ENCODE measurements at regions of chr7 and their contacts with region 1.

Region 1: DNA sequence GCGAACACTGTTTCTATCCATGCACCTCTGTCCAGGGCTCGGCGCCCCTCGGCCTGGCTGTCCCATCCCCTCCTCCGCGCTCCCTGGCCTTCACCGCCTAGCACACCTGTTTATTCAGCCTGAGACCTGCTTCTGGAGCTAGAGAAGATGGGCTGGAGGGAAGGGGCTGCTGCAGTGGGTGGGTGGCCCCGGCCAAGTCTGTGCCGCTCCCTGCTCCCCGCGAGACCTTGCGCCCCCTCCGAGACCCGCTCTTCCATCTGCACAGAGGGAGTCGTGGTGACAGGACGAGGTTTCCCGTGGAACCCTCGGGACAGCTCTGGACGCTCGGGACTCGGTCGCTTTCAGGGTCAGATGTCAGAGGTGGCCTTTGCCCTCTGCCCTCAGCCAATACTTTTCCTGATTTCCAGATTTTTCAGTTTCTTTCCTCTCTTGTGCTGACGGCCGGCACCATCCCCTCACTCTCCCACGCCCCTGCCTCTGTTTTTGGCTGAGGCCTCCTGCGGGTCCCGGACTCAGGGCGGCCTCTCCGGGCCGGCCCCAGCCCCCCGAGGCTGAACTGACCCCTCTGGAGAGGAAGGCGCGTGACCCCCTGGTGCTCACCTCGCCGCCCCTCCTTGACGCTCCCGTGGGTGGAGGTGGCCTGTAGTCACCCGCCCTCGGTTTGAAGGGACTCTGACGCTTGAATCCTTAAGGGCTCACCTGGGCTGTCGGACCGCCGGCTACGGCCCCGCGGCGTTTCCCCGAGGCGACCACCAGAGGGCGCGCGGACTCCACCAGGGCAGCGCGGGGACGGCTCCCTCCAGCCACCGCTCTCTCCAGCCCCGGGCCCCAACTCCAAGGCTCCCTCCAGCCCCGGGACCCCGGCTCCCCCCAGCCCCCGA is 15.6 kb downstream of the SHH start:
- DNase-seq: no peak
- ATAC-seq: peak; percentile 96
- H3K4me3 ChIP-seq: no peak overlapping the region
- H3K27ac ChIP-seq: no peak overlapping the region
- H3K4me1 ChIP-seq: peaks cover 2% of the 10 kb centered on the region; the same call in 1 of the 2 replicates
- H3K27me3 ChIP-seq: peaks cover 36% of the 10 kb centered on the region
- CTCF ChIP-seq: peak; percentile 85
- POLR2A ChIP-seq: no peak
- RAD21 ChIP-seq: peak; percentile 89

Region 2: GRCh38 chr7:156650042-156650441 is 853.4 kb after region 1 on chr7:
- CTCF ChIA-PET with region 1: no interaction called
- POLR2A ChIA-PET with region 1: no interaction called
- dilution Hi-C with region 1: no loop called
- in situ Hi-C with region 1: loop called (anchors 25 kb)
- intact Hi-C with region 1: loop called (anchors 5 kb)
- DNase-seq: no peak
- ATAC-seq: peak; percentile 42; the same call in 1 of the 2 replicates
- H3K4me3 ChIP-seq: no peak overlapping the region
- H3K27ac ChIP-seq: no peak overlapping the region
- H3K4me1 ChIP-seq: no peaks in the 10 kb centered on the region; the same call in 1 of the 2 replicates
- H3K27me3 ChIP-seq: no peaks in the 10 kb centered on the region
- CTCF ChIP-seq: peak; percentile 41
- POLR2A ChIP-seq: no peak
- RAD21 ChIP-seq: peak; percentile 41

Region 3: DNA sequence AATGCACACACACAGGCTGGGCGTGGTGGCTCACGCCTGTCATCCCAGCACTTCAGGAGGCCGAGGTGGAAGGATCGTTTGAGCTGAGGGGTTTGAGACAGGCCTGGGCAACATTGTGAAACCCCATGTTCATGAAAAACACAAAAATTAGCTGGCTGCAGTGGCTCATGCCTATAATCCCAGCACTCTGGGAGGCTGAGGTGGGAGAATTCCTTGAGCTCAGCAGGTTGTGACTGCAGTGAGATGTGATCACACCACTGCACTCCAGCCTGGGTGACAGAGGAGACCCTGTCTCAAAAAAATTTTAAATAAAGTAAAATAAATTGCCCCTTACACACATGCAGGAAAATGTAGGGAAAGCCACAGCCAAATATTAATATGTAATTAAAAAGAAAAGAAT is 888.0 kb after region 1 on chr7:
- CTCF ChIA-PET with region 1: no interaction called
- POLR2A ChIA-PET with region 1: no interaction called
- dilution Hi-C with region 1: no loop called
- in situ Hi-C with region 1: no loop called
- intact Hi-C with region 1: no loop called
- DNase-seq: no peak
- ATAC-seq: no peak
- H3K4me3 ChIP-seq: no peak overlapping the region
- H3K27ac ChIP-seq: no peak overlapping the region
- H3K4me1 ChIP-seq: no peaks in the 10 kb centered on the region
- H3K27me3 ChIP-seq: no peaks in the 10 kb centered on the region
- CTCF ChIP-seq: no peak
- POLR2A ChIP-seq: no peak
- RAD21 ChIP-seq: no peak

Region 4: GRCh38 chr7:156764016-156764669 is 967.5 kb after region 1 on chr7:
- CTCF ChIA-PET with region 1: no interaction called
- POLR2A ChIA-PET with region 1: no interaction called
- dilution Hi-C with region 1: no loop called
- in situ Hi-C with region 1: no loop called
- intact Hi-C with region 1: loop called (anchors 2 kb)
- DNase-seq: peak; percentile 78
- ATAC-seq: peak; percentile 100
- H3K4me3 ChIP-seq: no peak overlapping the region
- H3K27ac ChIP-seq: no peak overlapping the region
- H3K4me1 ChIP-seq: no peaks in the 10 kb centered on the region
- H3K27me3 ChIP-seq: no peaks in the 10 kb centered on the region
- CTCF ChIP-seq: peak; percentile 89
- POLR2A ChIP-seq: 0 out of 2 replicates have a peak, but pooled peaks have one; percentile 38
- RAD21 ChIP-seq: peak; percentile 96

Region 5: GRCh38 chr7:156816943-156817572 is 1020.4 kb after region 1 on chr7:
- CTCF ChIA-PET with region 1: no interaction called
- POLR2A ChIA-PET with region 1: no interaction called
- dilution Hi-C with region 1: no loop called
- in situ Hi-C with region 1: loop called (anchors 5 kb)
- intact Hi-C with region 1: loop called (anchors 1 kb)
- DNase-seq: peak; percentile 38
- ATAC-seq: peak; percentile 72
- H3K4me3 ChIP-seq: no peak overlapping the region
- H3K27ac ChIP-seq: no peak overlapping the region
- H3K4me1 ChIP-seq: no peaks in the 10 kb centered on the region
- H3K27me3 ChIP-seq: no peaks in the 10 kb centered on the region
- CTCF ChIP-seq: peak; percentile 67
- POLR2A ChIP-seq: no peak
- RAD21 ChIP-seq: peak; percentile 79

Region 6: GRCh38 chr7:157138424-157139110 is 1341.9 kb after region 1 on chr7 and contains the start of gene UBE3C:
- CTCF ChIA-PET with region 1: no interaction called
- POLR2A ChIA-PET with region 1: no interaction called
- dilution Hi-C with region 1: no loop called
- in situ Hi-C with region 1: no loop called
- intact Hi-C with region 1: loop called (anchors 10 kb)
- DNase-seq: peak; percentile 90
- ATAC-seq: peak; percentile 89
- H3K4me3 ChIP-seq: peak within 1 kb of the TSS; percentile 59
- H3K27ac ChIP-seq: peak within 1 kb of the TSS; percentile 89
- H3K4me1 ChIP-seq: peaks cover 11% of the 10 kb centered on the region
- H3K27me3 ChIP-seq: no peaks in the 10 kb centered on the region
- CTCF ChIP-seq: no peak
- POLR2A ChIP-seq: peak; percentile 70
- RAD21 ChIP-seq: no peak
- total RNA-seq, gene UBE3C: 60.6 and 88.6 TPM in 2 replicates